Endothelial cell of umbilical vein (primary cell): ENCODE measurements at regions of chr2 and their contacts with region 1.

Region 1: DNA sequence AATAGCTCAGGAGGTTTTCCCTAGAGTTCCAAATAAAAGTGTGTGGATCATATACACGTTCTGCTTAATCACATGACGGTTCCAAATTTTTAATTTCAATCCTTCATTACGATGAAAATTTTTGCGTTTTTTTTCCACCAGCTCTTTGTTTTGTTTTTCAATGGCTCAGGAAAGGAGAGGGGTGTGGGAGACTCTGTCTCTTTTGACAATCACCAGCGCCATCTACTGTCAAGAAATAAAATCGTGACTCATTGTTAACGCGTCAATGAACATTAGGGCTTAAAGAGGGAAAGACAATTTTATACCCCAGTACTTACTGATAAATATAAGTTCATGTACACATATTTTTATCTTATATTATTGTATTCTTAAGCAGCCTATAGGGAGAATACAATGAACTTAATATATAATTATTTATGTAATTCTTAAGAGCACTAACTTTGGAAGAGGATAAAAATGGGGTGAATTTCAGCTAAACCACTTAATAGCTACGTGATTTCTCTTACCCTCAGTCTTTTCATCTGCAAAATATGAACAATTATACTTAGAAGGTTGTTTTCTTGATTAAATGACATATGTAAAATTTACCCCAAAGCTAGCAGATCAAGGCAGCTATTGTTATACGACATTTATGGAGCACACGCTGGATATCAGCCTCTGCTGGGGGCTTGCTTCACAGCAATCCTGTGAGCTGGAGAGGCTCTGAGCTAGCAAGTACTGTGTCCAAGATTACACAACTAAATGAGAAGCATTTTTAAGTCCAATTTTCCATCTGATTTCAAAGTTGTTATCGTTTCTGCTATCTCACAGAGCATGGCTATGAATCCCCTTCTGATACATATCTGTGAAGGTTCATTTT is 47.4 kb upstream of the RMDN2 start:
- DNase-seq: peak; percentile 73
- H3K4me3 ChIP-seq: no peak overlapping the region
- H3K27ac ChIP-seq: no peak overlapping the region
- H3K4me1 ChIP-seq: peaks cover 3% of the 10 kb centered on the region
- H3K27me3 ChIP-seq: no peaks in the 10 kb centered on the region
- CTCF ChIP-seq: peak; percentile 31 to 39
- POLR2A ChIP-seq: no peak

Region 2: GRCh38 chr2:37283207-37283606 is 594.5 kb before region 1 on chr2:
- CTCF ChIA-PET with region 1: interaction called, 8 read pairs
- POLR2A ChIA-PET with region 1: no interaction called
- dilution Hi-C with region 1: no loop called
- intact Hi-C with region 1: loop called (anchors 5 kb)
- DNase-seq: peak; percentile 80
- H3K4me3 ChIP-seq: no peak overlapping the region
- H3K27ac ChIP-seq: peak overlapping the region; percentile 56
- H3K4me1 ChIP-seq: peaks cover 17% of the 10 kb centered on the region
- H3K27me3 ChIP-seq: no peaks in the 10 kb centered on the region
- CTCF ChIP-seq: no peak
- POLR2A ChIP-seq: no peak

Region 3: DNA sequence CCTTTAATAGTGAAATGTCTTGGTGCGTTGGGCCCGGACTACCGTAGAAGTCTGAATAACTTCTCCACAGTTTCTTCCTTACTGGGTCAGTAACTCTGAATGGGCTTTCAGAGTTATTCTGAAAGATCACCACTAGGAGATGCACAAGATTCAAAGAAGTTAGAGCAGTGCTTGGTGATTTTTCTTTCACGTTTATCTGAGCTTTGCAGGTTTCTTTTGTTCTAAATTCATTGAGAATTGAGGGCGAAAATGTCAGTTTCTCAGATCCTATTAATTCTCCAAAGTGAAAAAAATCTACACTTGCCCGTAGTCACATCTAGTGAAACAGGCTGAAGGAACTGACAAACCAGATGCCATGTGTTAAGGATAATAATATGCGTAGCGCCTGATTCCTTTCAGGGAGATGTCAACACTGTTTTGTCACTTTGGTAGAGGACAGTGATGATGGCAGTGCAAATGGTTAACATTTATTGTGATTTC is 463.2 kb before region 1 on chr2:
- CTCF ChIA-PET with region 1: interaction called, 509 read pairs
- POLR2A ChIA-PET with region 1: interaction called, 3 read pairs
- dilution Hi-C with region 1: loop called (anchors 25 kb)
- intact Hi-C with region 1: loop called (anchors 1 kb)
- DNase-seq: peak; percentile 71
- H3K4me3 ChIP-seq: no peak overlapping the region
- H3K27ac ChIP-seq: no peak overlapping the region
- H3K4me1 ChIP-seq: peaks cover 6% of the 10 kb centered on the region
- H3K27me3 ChIP-seq: no peaks in the 10 kb centered on the region
- CTCF ChIP-seq: peak; percentile 74 to 86
- POLR2A ChIP-seq: no peak

Region 4: GRCh38 chr2:37585982-37586621 is 291.6 kb before region 1 on chr2:
- CTCF ChIA-PET with region 1: interaction called, 33 read pairs
- POLR2A ChIA-PET with region 1: no interaction called
- dilution Hi-C with region 1: no loop called
- intact Hi-C with region 1: no loop called
- DNase-seq: peak; percentile 96
- H3K4me3 ChIP-seq: no peak overlapping the region
- H3K27ac ChIP-seq: peak overlapping the region; percentile 75
- H3K4me1 ChIP-seq: peaks cover 88% of the 10 kb centered on the region
- H3K27me3 ChIP-seq: no peaks in the 10 kb centered on the region
- CTCF ChIP-seq: no peak
- POLR2A ChIP-seq: no peak

Region 5: GRCh38 chr2:37672104-37672869 is 205.4 kb before region 1 on chr2:
- CTCF ChIA-PET with region 1: interaction called, 38 read pairs
- POLR2A ChIA-PET with region 1: no interaction called
- dilution Hi-C with region 1: no loop called
- intact Hi-C with region 1: loop called (anchors 5 kb)
- DNase-seq: peak; percentile 85
- H3K4me3 ChIP-seq: peak overlapping the region; percentile 59 to 84 (median 67)
- H3K27ac ChIP-seq: peak overlapping the region; percentile 75
- H3K4me1 ChIP-seq: peaks cover 43% of the 10 kb centered on the region
- H3K27me3 ChIP-seq: no peaks in the 10 kb centered on the region
- CTCF ChIP-seq: no peak
- POLR2A ChIP-seq: no peak

Region 6: DNA sequence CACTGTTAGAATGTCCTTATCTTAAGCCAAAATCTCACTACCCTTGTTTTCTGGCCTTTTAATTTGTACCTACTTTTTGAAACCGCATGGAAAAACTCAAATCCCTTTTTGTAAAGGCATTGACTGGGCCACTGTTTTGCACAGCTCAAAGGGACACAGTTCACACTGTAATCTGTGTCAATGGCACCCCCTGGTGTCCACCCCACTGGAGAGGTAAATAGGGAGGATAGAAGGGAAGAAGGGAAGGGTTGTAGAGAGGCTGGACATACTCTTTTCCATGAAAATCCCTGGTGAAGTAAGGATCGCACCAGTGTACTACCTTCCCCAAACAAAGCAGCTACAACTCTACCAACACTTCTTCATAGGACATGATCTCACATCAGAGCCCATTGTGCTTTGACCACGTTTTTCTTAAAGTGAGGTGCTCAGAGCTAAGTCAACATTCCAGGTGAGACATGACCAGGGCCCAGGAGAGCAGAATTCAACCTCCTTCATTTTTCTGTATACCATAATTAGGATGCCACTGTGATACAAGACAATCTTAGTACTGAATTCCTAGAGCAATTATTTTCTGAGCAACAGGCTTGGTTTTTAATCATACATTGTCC is 45.0 kb before region 1 on chr2:
- CTCF ChIA-PET with region 1: interaction called, 270 read pairs
- POLR2A ChIA-PET with region 1: interaction called, 3 read pairs
- dilution Hi-C with region 1: no loop called
- intact Hi-C with region 1: loop called (anchors 1 kb)
- DNase-seq: peak; percentile 85
- H3K4me3 ChIP-seq: no peak overlapping the region
- H3K27ac ChIP-seq: no peak overlapping the region
- H3K4me1 ChIP-seq: peaks cover 30% of the 10 kb centered on the region
- H3K27me3 ChIP-seq: no peaks in the 10 kb centered on the region
- CTCF ChIP-seq: peak; percentile 71 to 77
- POLR2A ChIP-seq: no peak

Region 7: DNA sequence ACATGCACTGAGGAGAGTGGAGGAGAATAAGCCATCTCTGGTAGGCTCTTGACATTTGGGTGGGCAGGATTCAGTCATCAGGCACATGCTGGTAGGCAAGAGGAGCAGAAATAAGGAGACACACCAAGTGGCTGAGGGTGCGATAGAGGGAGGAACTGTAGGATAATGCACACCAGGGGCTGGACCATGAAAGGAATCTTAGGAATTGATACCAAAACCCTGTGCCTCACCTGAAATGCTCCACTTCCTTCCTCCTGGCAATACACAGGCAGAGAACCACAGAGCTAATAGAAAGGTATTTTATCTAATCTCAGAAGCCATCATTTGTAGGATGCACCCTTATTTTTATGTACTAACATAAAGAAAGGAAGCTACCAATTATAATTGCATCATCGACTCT is 202.6 kb after region 1 on chr2:
- CTCF ChIA-PET with region 1: no interaction called
- POLR2A ChIA-PET with region 1: no interaction called
- dilution Hi-C with region 1: no loop called
- intact Hi-C with region 1: no loop called
- DNase-seq: no peak
- H3K4me3 ChIP-seq: no peak overlapping the region
- H3K27ac ChIP-seq: no peak overlapping the region
- H3K4me1 ChIP-seq: peaks cover 16% of the 10 kb centered on the region
- H3K27me3 ChIP-seq: peaks cover 19 to 23% of the 10 kb centered on the region in 2 experiments
- CTCF ChIP-seq: no peak
- POLR2A ChIP-seq: no peak

Region 8: DNA sequence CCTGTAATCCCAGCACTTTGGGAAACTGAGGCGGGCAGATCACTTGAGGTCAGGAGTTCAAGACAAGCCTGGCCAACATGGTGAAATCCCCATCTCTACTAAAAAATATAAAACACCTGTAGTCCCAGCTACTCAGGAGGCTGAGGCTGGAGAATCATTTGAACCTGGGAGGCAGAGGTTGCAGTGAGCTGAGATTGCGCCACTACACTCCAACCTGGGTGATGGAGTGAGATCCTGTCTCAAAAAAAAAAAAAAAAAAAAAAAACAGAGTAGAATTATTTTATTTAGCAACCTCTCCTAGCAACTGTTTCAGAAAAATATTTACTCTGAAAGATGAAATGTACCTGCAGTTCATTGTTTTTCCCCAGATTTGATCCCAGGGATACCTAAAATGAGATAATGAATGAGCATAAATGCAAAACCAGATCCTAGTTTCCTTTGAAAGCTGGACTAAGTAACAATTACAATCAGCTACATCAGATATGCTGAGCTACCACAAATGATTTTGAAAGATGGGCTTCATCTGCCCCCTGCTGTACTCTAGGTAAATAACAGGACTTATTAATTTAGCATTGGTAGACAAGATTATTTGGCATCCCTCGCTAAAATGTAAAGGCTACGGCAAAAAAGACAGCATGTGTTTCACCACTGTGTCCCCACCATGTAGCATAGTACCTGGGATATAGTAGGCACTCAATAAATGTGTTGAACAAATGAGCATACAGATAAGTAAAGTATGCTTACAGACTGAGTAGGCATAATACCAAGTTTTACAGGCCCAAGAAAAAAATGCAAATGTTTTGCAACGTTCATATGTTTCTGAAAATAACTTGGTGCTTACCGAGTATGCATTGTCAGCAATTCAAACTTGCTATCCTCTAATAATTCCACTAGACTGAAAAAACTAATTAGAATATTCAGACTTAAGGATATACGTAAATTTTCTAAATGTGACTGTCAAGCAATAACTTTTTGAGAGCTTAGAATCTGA is 396.9 kb after region 1 on chr2:
- CTCF ChIA-PET with region 1: interaction called, 11 read pairs
- POLR2A ChIA-PET with region 1: no interaction called
- dilution Hi-C with region 1: no loop called
- intact Hi-C with region 1: no loop called
- DNase-seq: peak; percentile 77
- H3K4me3 ChIP-seq: no peak overlapping the region
- H3K27ac ChIP-seq: no peak overlapping the region
- H3K4me1 ChIP-seq: no peaks in the 10 kb centered on the region
- H3K27me3 ChIP-seq: no peaks in the 10 kb centered on the region
- CTCF ChIP-seq: peak; percentile 34 to 39
- POLR2A ChIP-seq: no peak